ENCODE measurements at regions of chr11 and their contacts with region 1.

Region 1: GRCh38 chr11:114110952-114111947 is 51.7 kb downstream of the ZBTB16 start:
- DNase-seq: no peak
- ATAC-seq: peak; percentile 40 to 48 (median 42)
- H3K4me3 ChIP-seq: no peak overlapping the region
- H3K4me3 Mint-ChIP-seq: peak overlapping the region; percentile 89
- H3K27ac ChIP-seq: no peak overlapping the region
- H3K27ac Mint-ChIP-seq: peak overlapping the region; percentile 63 to 78
- H3K4me1 ChIP-seq: peaks cover 48% of the 10 kb centered on the region
- H3K4me1 Mint-ChIP-seq: peaks cover 87 to 95% of the 10 kb centered on the region in 2 donors
- H3K27me3 ChIP-seq: peaks cover 2% of the 10 kb centered on the region
- H3K27me3 Mint-ChIP-seq: no peaks in the 10 kb centered on the region
- CTCF ChIP-seq: no peak

Region 2: GRCh38 chr11:114125959-114126358 is 14.7 kb after region 1 on chr11:
- intact Hi-C with region 1: loop called (anchors 2 kb)
- DNase-seq: no peak
- ATAC-seq: no peak
- H3K4me3 ChIP-seq: no peak overlapping the region
- H3K4me3 Mint-ChIP-seq: no peak overlapping the region
- H3K27ac ChIP-seq: no peak overlapping the region
- H3K27ac Mint-ChIP-seq: peak overlapping the region; percentile 85 to 88
- H3K4me1 ChIP-seq: peaks cover 33% of the 10 kb centered on the region
- H3K4me1 Mint-ChIP-seq: peaks cover 97% of the 10 kb centered on the region in 2 donors
- H3K27me3 ChIP-seq: no peaks in the 10 kb centered on the region
- H3K27me3 Mint-ChIP-seq: no peaks in the 10 kb centered on the region
- CTCF ChIP-seq: no peak

Region 3: DNA sequence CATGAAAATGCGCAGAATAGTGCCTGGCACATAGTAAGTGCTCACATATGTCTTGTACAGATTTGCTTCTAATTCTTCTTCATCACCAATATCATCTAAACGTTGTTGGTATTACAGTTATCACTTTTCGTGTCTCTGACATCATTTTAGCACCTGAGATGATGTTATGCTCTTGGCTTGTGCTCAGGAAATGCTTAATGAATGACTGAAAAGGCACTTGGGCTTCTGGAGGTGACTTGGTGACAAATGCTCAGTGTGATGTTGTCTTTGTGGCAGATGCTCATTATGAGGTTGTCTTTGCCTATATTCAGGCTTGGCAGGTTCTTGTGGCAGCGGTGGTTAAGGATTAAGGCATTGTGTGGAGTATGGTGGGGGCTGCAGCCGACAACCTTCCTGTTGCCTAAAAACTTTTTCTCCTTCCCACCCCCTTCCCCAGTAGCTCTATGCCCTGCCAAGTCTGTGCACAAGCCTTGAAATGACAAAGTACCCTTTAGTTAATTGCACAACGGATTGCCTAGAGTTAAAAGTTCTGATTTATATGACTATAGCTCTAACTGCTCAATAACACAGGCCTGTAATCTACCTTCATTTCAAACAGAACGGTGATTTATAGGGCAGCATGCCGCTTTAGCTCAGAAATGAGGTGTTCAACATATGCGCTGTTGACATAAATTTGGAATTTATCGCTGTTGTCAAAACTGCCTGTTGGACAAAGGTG is 30.8 kb after region 1 on chr11:
- intact Hi-C with region 1: loop called (anchors 5 kb)
- DNase-seq: no peak
- ATAC-seq: peak; percentile 22 to 62 (median 53)
- H3K4me3 ChIP-seq: no peak overlapping the region
- H3K4me3 Mint-ChIP-seq: peak overlapping the region; percentile 6
- H3K27ac ChIP-seq: no peak overlapping the region
- H3K27ac Mint-ChIP-seq: peak overlapping the region; percentile 74 to 85
- H3K4me1 ChIP-seq: peaks cover 60% of the 10 kb centered on the region
- H3K4me1 Mint-ChIP-seq: peaks cover 87 to 91% of the 10 kb centered on the region in 2 donors
- H3K27me3 ChIP-seq: no peaks in the 10 kb centered on the region
- H3K27me3 Mint-ChIP-seq: no peaks in the 10 kb centered on the region
- CTCF ChIP-seq: no peak

Region 4: DNA sequence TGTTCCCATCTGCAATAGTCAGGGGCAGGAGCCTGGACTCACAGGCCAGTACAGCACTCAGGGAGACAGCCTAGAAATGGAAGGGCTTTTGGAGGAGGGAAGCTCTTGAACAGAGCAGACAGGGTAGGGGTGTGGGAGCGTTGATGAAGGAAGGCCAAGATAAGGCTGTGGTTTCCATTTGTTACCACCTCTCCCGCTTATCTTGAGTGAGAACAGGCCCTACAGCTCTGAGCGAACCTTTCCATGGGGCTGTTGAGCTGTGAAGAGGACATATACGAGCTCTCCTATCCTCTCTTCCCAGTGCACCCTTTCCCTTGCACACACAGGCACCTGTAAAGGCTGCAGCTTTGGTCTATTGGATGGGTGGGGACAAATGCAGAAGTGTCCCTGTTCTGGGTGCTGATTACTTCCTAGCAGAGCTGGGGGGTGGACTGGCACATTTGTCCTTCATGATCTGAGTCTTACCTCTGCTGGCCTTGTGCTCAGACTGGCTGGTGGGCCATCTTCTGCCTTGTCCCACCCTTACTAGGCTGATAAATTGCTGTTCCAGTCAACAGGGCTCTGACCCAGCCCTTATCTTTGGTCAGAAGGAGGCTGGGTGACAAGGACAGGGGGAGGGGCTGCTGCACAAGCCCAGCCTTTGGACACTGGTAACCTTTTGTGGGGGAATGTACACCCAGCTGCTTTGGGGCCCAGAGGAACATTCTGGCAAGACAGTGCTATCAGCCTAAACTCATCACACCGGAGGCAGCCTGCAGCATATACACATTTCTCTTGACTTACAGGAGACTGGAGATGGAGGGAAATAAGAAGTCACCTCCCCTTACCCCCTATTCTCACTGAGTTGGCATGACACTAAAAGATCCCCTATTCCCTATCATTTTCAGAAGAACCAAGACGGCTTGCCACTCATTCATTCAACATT is 104.9 kb after region 1 on chr11:
- intact Hi-C with region 1: no loop called
- DNase-seq: peak in 1 of 2 donors; percentile 15
- ATAC-seq: peak; percentile 30 to 70 (median 58)
- H3K4me3 ChIP-seq: no peak overlapping the region
- H3K4me3 Mint-ChIP-seq: peak overlapping the region; percentile 61
- H3K27ac ChIP-seq: no peak overlapping the region
- H3K27ac Mint-ChIP-seq: peak overlapping the region; percentile 55 to 76
- H3K4me1 ChIP-seq: peaks cover 46% of the 10 kb centered on the region
- H3K4me1 Mint-ChIP-seq: peaks cover 88 to 94% of the 10 kb centered on the region in 2 donors
- H3K27me3 ChIP-seq: no peaks in the 10 kb centered on the region
- H3K27me3 Mint-ChIP-seq: no peaks in the 10 kb centered on the region
- CTCF ChIP-seq: no peak

Measured in natural killer cell (primary cell).